CD8-positive, alpha-beta memory T cell (primary cell): ENCODE measurements at regions of chr2 and their contacts with region 1.

Region 1: DNA sequence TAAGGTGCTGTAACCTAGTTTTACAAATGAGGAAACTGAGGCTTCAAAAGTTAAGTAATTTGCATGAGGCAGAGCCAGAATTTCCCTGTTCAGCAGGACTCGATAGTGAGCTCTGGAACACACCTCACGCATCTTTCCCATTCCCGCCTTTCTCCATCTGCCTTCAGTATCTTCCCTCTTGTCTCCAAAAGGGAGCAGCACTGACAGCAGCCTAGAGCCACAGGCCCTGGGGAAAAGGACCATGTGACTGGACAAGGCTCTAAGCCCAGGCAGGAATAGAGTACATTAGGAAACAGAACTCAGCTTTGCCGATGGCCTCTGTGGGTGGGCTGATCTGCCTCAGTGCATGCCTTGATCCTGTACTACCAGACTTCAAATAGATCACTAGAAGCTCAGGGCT is 21.5 kb downstream of the GPR155 start:
- DNase-seq: no peak
- H3K4me3 ChIP-seq: no peak overlapping the region
- H3K4me3 Mint-ChIP-seq: no peak overlapping the region
- H3K27ac ChIP-seq: no peak overlapping the region
- H3K27ac Mint-ChIP-seq: no peak overlapping the region
- H3K4me1 ChIP-seq: no peaks in the 10 kb centered on the region
- H3K4me1 Mint-ChIP-seq: peaks cover 0 to 1% (median 0%) of the 10 kb centered on the region in 3 donors
- H3K27me3 ChIP-seq: no peaks in the 10 kb centered on the region
- H3K27me3 Mint-ChIP-seq: no peaks in the 10 kb centered on the region

Region 2: GRCh38 chr2:174492963-174493431 is 27.7 kb after region 1 on chr2:
- CTCF ChIA-PET with region 1: interaction called, 13 read pairs
- POLR2A ChIA-PET with region 1: interaction called, 13 read pairs
- DNase-seq: peak; percentile 43 to 87 (median 83)
- H3K4me3 ChIP-seq: peak overlapping the region; percentile 60
- H3K4me3 Mint-ChIP-seq: peak overlapping the region; percentile 84 to 93 (median 91)
- H3K27ac ChIP-seq: peak overlapping the region; percentile 70
- H3K27ac Mint-ChIP-seq: peak overlapping the region; percentile 87 to 99 (median 97)
- H3K4me1 ChIP-seq: peaks cover 78% of the 10 kb centered on the region
- H3K4me1 Mint-ChIP-seq: peaks cover 75 to 86% (median 84%) of the 10 kb centered on the region in 3 donors
- H3K27me3 ChIP-seq: no peaks in the 10 kb centered on the region
- H3K27me3 Mint-ChIP-seq: no peaks in the 10 kb centered on the region

Region 3: DNA sequence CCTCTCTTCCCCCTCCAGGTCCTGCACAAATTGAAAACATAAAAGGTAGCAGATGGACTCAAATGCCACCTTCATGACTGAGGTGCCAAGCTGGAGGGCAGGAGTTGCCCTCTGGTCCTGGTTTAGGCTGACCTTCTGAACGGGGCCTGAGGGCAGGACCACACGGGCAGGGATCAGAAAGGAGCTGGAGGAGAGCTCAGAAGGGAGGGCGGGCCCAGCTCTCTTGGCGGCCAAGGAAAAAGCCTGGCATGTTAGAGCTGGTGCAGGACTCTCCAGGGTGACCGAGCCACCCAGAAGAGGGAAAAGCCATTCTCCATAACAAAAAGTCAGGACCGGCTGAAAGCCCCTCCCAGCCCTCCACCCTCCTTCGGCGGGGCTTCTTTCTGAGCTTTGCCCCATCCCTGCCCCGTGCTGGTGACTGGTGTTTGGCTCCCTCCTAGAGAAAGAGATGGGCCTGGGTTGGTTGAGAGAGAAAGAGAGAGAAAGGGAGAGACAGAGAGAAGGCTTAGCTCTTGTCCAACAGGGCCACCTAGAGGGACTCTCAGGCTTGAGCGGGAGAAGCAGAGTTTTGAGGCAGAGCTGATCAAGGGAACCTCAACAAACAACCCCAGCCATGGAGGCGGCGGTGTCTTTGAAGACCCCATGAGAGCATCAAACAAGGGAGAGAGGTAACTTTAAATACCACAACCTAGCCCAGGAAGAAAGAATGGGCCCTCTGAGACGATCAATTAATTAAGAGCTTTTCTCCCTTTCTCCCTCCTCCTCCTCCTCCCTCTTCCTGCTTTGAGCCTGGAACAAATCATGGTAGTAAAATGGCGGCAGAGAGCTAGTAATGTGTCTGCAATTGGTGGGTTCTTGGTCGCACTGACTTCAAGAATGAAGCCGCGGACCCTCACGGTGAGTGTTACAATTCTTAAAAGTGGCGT is 81.5 kb after region 1 on chr2:
- CTCF ChIA-PET with region 1: interaction called, 21 read pairs
- POLR2A ChIA-PET with region 1: interaction called, 4 read pairs
- DNase-seq: peak in 2 of 5 donors; percentile 39 to 52
- H3K4me3 ChIP-seq: peak overlapping the region; percentile 10
- H3K4me3 Mint-ChIP-seq: peak overlapping the region in 5 of 7 donors; percentile 16 to 54 (median 43)
- H3K27ac ChIP-seq: peak overlapping the region; percentile 52
- H3K27ac Mint-ChIP-seq: peak overlapping the region in 6 of 8 donors; percentile 28 to 68 (median 44)
- H3K4me1 ChIP-seq: no peaks in the 10 kb centered on the region
- H3K4me1 Mint-ChIP-seq: peaks cover 12 to 31% (median 17%) of the 10 kb centered on the region in 3 donors
- H3K27me3 ChIP-seq: no peaks in the 10 kb centered on the region
- H3K27me3 Mint-ChIP-seq: peaks cover 0 to 1% of the 10 kb centered on the region in 2 donors

Region 4: DNA sequence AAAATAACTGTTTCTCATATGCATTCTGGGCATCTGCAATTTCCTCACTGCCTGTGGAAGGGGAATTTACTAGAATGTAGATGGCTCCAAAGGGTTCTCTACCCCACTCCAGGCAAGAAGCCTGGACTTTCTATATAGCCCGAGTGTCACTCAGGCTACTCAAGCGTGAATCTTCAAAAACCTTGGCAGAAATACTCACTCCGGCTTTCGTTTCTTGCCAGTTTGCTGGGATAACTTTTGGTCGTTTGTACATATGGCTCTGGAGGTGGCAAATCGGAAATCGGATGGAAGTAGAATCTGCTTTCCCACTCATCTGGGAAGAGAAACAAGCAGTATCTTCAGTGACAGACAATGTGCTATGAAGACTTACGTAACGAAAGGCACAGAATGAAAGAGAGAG is 101.5 kb after region 1 on chr2:
- CTCF ChIA-PET with region 1: interaction called, 11 read pairs
- POLR2A ChIA-PET with region 1: no interaction called
- DNase-seq: no peak
- H3K4me3 ChIP-seq: no peak overlapping the region
- H3K4me3 Mint-ChIP-seq: no peak overlapping the region
- H3K27ac ChIP-seq: no peak overlapping the region
- H3K27ac Mint-ChIP-seq: peak overlapping the region in 5 of 8 donors; percentile 6 to 74 (median 74)
- H3K4me1 ChIP-seq: peaks cover 21% of the 10 kb centered on the region
- H3K4me1 Mint-ChIP-seq: peaks cover 36 to 59% (median 49%) of the 10 kb centered on the region in 3 donors
- H3K27me3 ChIP-seq: no peaks in the 10 kb centered on the region
- H3K27me3 Mint-ChIP-seq: no peaks in the 10 kb centered on the region

Region 5: DNA sequence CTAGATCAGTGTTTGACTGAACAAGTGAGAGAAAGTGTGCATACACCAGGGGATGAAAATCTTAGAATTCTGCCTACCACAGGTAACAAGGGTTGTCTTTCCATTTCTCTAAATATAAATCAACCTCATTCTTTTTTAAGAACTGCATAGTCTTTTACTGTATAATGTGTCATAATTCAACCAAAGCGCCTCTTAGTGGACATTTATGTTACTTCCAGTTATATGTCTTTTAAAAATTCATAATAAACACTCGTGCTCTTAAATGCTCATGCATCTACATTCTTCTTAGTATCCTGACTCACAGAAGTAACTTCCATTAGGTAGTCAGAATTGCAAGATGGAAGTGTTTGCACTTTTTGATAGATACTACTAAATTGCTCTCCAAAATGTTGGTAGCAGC is 222.8 kb after region 1 on chr2:
- CTCF ChIA-PET with region 1: interaction called, 41 read pairs
- POLR2A ChIA-PET with region 1: no interaction called
- DNase-seq: peak in 2 of 5 donors; percentile 36 to 47
- H3K4me3 ChIP-seq: no peak overlapping the region
- H3K4me3 Mint-ChIP-seq: peak overlapping the region in 1 of 7 donors; percentile 57
- H3K27ac ChIP-seq: no peak overlapping the region
- H3K27ac Mint-ChIP-seq: peak overlapping the region; percentile 19 to 67 (median 39)
- H3K4me1 ChIP-seq: no peaks in the 10 kb centered on the region
- H3K4me1 Mint-ChIP-seq: peaks cover 18 to 37% (median 24%) of the 10 kb centered on the region in 3 donors
- H3K27me3 ChIP-seq: no peaks in the 10 kb centered on the region
- H3K27me3 Mint-ChIP-seq: peaks cover 2 to 8% of the 10 kb centered on the region in 2 donors

Region 6: GRCh38 chr2:174764280-174765255 is 299.2 kb after region 1 on chr2 and contains the start of gene CHRNA1:
- CTCF ChIA-PET with region 1: no interaction called
- POLR2A ChIA-PET with region 1: no interaction called
- DNase-seq: no peak
- H3K4me3 ChIP-seq: no peak within 1 kb of the TSS
- H3K4me3 Mint-ChIP-seq: no peak within 1 kb of the TSS
- H3K27ac ChIP-seq: no peak within 1 kb of the TSS
- H3K27ac Mint-ChIP-seq: peak within 1 kb of the TSS in 2 of 8 donors; percentile 17 to 27
- H3K4me1 ChIP-seq: no peaks in the 10 kb centered on the region
- H3K4me1 Mint-ChIP-seq: no peaks in the 10 kb centered on the region
- H3K27me3 ChIP-seq: no peaks in the 10 kb centered on the region
- H3K27me3 Mint-ChIP-seq: peaks cover 8 to 24% of the 10 kb centered on the region in 2 donors
- total RNA-seq, gene CHRNA1: not detected

Region 7: DNA sequence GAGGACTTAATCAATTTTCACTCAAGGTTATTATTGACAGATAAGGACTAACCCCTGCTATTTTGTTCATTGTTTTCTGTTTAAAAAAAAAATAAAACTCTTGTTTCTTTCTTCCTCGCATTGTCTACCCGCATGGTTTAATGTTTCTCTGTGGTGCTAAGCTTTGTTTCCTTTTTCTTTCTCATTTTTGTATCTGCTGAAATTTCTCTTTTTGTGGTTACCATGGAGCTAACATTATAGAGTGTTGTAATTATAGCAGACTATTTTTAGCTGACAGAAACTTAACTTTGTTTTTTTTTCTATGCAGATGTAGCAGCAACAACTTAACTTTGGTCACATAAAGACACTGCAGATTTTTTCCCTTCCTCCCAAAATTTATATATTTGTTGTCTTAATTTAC is 582.9 kb after region 1 on chr2:
- CTCF ChIA-PET with region 1: no interaction called
- POLR2A ChIA-PET with region 1: no interaction called
- DNase-seq: no peak
- H3K4me3 ChIP-seq: no peak overlapping the region
- H3K4me3 Mint-ChIP-seq: no peak overlapping the region
- H3K27ac ChIP-seq: no peak overlapping the region
- H3K27ac Mint-ChIP-seq: peak overlapping the region in 1 of 8 donors; percentile 13
- H3K4me1 ChIP-seq: no peaks in the 10 kb centered on the region
- H3K4me1 Mint-ChIP-seq: no peaks in the 10 kb centered on the region
- H3K27me3 ChIP-seq: no peaks in the 10 kb centered on the region
- H3K27me3 Mint-ChIP-seq: no peaks in the 10 kb centered on the region